Left colon (tissue), 2 donors: ENCODE measurements at regions of chr3 and their contacts with region 1.

Region 1: DNA sequence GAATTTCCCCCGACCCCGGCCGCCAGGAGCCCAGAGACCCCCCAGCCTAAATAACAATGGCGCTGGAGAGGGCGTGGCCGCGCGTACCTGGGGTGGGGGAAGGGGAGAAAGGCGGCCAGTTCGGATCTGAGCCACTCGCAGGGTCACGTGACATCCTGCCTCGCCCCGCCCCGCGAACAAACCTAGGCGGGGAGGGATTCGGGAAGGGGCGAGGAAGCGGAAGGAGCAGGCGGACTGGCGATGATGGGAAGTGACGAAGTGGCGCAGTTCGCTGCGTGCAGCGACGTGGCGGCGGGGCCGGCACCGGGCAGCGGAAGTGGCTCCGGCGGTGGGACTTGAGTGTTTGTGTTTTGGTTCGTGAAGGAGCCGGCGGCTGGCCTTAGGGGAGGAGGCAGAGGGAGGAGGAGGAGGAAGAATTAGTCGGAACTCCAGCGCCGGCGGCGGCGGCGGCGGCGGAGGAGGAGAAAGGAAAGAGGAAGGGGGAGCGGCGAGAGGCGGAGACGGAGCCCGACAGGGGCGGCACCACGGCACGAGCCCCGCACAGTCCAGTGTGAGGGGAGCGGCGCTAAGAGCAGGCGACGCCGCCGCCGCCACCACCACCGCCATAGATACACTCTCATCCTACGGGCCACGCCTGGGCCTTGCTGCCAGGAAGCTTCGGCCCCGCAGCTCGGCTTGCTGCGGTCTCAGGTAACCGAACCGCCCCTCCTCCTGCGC is at the start of gene RAB5A:
- DNase-seq: peak; percentile 98 to 99
- ATAC-seq: peak; percentile 88
- total RNA-seq, gene RAB5A: 67.1 to 75.5 TPM

Region 2: DNA sequence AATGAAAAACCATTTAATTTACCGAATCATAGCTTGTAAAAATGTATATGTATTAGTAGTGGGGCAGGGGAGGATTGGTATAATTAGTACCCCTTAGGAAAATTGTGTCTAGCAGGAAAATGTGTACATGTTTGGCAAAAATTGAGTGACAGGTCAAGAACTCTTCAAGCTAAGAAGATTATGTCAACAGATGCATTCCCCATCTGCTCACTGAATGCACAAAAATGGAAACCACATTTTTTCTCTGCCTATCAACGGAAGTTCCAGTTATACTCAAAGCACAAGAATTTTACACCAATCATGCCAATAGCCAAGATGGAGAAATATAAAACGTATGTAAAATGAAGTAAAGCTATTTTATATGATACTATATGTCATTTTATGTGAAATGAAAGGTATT is 420.9 kb before region 1 on chr3:
- intact Hi-C with region 1: no loop called
- DNase-seq: no peak
- ATAC-seq: no peak

Region 3: GRCh38 chr3:19885468-19885867 is 61.5 kb before region 1 on chr3:
- intact Hi-C with region 1: loop called in 1 of 2 experiments (anchors 5 kb)
- DNase-seq: no peak
- ATAC-seq: no peak

Region 4: DNA sequence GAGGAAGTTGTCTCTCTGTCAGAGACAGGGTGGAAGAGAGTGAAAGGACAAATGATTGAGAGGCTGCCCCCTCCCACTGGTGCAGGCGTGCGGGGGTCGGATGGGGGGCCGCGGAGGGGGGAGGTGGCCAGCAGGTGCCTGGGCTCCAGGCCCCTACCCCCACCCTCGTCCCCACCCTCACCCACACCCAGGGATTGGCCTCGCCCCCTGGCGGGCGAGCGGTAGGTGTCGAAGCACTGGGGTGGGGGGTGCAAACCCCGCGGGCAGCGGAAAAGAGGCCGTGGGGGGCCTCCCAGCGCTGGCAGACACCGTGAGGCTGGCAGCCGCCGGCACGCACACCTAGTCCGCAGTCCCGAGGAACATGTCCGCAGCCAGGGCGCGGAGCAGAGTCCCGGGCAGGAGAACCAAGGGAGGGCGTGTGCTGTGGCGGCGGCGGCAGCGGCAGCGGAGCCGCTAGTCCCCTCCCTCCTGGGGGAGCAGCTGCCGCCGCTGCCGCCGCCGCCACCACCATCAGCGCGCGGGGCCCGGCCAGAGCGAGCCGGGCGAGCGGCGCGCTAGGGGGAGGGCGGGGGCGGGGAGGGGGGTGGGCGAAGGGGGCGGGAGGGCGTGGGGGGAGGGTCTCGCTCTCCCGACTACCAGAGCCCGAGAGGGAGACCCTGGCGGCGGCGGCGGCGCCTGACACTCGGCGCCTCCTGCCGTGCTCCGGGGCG is 92.9 kb after region 1 on chr3 and contains the start of gene KAT2B:
- intact Hi-C with region 1: loop called in 1 of 2 experiments (anchors 5 kb)
- DNase-seq: peak; percentile 80 to 85
- ATAC-seq: peak; percentile 69
- total RNA-seq, gene KAT2B: 26.6 to 28.8 TPM

Region 5: DNA sequence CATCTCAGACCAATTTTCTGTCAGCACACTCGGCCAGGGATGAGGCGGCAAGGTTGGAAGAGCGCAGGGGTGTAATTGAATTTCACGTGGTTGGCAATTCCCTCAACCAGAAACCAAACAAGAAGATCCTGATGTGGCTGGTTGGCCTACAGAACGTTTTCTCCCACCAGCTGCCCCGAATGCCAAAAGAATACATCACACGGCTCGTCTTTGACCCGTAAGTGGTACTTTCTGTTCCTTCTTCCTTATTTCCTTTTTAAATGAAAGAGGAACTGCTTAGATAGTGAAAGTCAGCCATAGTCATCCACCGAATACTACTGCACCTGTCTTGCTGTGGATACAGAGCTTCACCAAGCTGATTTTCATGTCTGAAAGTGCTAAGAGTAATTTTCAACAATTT is 178.9 kb after region 1 on chr3:
- intact Hi-C with region 1: no loop called
- DNase-seq: no peak
- ATAC-seq: no peak

Region 6: DNA sequence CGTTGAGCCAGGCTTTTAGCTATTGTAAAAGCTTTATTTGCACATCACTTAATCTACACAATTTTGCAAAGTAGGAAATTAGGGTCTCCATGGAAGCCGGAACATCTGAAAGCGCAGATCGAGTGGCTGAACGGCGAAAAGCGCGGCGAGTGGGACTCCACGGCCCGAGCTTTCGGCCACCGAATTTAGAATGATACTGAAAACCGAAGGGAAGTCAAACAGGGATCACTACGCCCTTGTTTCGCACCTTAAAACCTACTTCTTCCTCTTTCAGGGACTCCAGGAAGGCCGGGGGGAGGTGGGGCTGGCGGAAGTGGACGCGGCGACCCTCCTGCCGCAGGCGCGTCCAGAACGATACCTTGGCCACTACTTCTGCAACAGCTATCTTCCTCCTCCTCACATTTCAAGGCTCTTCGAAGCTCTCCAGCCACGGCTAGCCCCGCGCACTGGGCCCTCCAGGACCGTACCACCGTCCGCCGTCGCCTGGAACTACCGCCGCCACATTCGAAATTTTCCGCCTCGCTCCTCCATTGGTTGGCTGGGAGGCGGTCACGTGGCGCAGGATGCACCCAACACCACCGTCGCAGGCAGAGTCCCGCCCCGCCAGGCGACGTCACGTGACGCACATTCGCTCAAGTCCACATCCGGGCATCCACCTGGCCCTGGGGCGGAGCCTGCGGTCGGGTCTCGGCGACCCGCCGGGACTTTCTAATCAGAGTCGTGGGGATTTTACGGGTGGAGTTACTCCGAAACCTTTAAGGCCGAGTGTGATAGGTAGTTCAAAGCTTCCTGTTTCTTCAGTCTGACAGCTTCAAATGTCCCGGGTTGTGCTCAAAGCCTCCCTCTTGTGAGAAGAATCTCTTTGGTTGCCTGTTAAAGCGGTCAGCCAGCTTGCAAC is 239.0 kb after region 1 on chr3 and contains the start of gene SGO1:
- intact Hi-C with region 1: loop called in 1 of 2 experiments (anchors 5 kb)
- DNase-seq: peak; percentile 99 to 100
- ATAC-seq: peak; percentile 98
- total RNA-seq, gene SGO1: 2.8 to 4.8 TPM